CD8-positive, alpha-beta T cell (primary cell): ENCODE measurements at regions of chr14 and their contacts with region 1.

Region 1: DNA sequence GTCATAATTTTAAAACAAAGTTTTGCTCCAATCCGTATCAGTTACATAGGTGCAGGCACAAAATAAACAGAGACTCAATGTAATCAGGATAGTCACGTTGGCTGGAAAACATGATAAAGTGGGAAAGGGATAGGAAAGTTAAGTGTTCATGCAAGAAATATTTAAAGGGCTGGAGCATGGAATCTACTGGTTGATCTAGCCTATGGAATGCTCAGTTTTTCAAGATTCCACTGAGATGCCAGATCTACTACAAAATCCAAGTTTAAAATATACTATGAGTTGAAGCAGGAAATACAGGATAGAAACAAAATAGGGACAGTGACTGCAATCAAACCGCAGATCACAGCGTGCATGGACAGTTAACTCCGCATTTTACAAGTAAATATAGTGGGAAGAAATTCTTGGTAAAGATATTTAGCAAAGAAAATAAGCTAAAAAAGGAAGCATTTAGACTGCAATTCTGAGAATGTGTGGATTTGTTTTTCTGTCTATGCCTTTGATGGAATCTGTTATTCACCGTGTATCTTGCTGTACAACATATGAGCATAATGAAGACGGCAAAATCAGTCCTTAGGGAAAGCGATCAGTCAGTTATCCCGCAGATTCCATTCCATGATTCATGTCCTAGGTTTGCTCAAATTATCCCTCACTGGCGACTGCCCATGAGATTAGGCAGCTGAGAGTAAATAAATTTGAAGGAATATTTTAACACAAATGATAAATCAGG is 1044.3 kb downstream of the FLRT2 start:
- DNase-seq: no peak
- ATAC-seq: no peak
- H3K4me3 ChIP-seq: no peak overlapping the region
- H3K4me3 Mint-ChIP-seq: no peak overlapping the region
- H3K27ac ChIP-seq: no peak overlapping the region
- H3K27ac Mint-ChIP-seq: no peak overlapping the region
- H3K4me1 ChIP-seq: no peaks in the 10 kb centered on the region
- H3K4me1 Mint-ChIP-seq: no peaks in the 10 kb centered on the region
- H3K27me3 ChIP-seq: no peaks in the 10 kb centered on the region
- H3K27me3 Mint-ChIP-seq: no peaks in the 10 kb centered on the region
- CTCF ChIP-seq: no peak

Region 2: DNA sequence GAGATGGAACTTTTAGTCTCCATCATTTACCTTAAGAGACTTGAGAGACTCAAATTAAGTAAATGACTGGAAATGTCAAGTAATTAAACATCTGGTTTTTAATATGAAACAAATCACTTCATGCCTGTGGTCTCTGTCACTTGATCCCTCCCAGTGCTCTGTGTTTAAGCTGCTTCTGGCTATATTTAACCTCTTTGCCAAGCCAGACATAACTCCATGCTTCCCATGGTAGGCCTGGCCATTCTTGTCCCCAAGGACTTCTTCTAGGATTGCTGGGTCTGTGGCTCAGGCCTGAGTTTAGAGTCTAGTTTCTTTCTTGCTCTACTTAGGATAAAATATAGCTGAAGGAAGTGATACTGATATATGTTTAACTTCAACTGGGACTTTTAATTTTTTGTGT is 30.7 kb before region 1 on chr14:
- CTCF ChIA-PET with region 1: no interaction called
- POLR2A ChIA-PET with region 1: no interaction called
- intact Hi-C with region 1: loop called in 1 of 2 experiments (anchors 2 kb)
- DNase-seq: no peak
- ATAC-seq: no peak
- H3K4me3 ChIP-seq: no peak overlapping the region
- H3K4me3 Mint-ChIP-seq: no peak overlapping the region
- H3K27ac ChIP-seq: no peak overlapping the region
- H3K27ac Mint-ChIP-seq: no peak overlapping the region
- H3K4me1 ChIP-seq: no peaks in the 10 kb centered on the region
- H3K4me1 Mint-ChIP-seq: no peaks in the 10 kb centered on the region
- H3K27me3 ChIP-seq: no peaks in the 10 kb centered on the region
- H3K27me3 Mint-ChIP-seq: no peaks in the 10 kb centered on the region
- CTCF ChIP-seq: no peak